Heart right ventricle (tissue), 16 donors: ENCODE measurements at regions of chr13 and their contacts with region 1.

Region 1: DNA sequence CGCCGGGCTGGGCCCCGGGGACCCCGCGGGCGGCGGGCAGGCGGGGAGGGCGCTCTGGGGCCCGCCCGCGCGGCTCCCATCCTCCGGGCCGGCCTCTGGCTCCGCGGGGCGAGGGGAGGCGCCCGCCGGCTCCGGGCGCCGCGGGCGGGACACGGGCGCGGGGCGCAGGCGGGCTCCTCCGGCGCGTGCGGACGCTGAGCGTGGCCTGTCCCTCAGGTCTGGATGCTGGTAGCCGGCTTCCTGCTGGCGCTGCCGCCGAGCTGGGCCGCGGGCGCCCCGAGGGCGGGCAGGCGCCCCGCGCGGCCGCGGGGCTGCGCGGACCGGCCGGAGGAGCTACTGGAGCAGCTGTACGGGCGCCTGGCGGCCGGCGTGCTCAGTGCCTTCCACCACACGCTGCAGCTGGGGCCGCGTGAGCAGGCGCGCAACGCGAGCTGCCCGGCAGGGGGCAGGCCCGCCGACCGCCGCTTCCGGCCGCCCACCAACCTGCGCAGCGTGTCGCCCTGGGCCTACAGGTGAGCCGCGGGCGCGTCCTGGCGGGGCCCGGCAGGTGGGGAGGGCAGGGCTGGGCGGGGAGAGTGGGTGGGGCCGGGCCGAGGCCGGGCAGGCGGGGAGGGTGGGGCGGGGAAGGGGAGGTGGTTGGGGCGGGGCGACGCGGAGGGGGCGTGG is 414 bp downstream of the IL17D start:
- DNase-seq: peak; percentile 54 to 76
- ATAC-seq: peak; percentile 73 to 90 (median 81)
- H3K4me3 ChIP-seq: peak overlapping the region in 9 of 10 donors; percentile 27 to 81 (median 52)
- H3K27ac ChIP-seq: peak overlapping the region in 1 of 10 donors; percentile 53
- H3K4me1 ChIP-seq: peaks cover 0 to 25% (median 12%) of the 10 kb centered on the region in 9 donors
- H3K27me3 ChIP-seq: peaks cover 0 to 38% (median 14%) of the 10 kb centered on the region in 7 donors
- CTCF ChIP-seq: peak; percentile 18 to 67 (median 50)

Region 2: DNA sequence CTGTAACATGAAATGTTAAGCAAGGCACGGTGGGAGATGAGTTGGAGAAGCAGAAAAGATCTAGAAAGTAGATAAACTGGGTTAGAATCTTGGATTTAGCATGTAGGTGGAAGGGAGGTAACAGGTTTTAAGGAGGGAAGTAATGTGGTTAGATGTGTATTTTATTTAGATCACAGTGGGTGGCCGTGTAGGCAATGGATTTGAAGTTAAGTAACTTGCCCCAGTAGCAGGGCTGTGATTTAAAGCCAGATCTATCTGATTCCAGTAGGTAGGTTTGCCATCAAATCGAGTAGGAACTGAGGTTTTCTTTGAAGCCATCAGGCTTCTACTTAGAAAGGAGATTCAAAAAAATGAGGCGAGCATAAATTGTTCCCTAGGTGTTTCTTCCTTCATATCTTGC is 51.0 kb before region 1 on chr13:
- intact Hi-C with region 1: no loop called
- DNase-seq: no peak
- ATAC-seq: no peak
- H3K4me3 ChIP-seq: no peak overlapping the region
- H3K27ac ChIP-seq: no peak overlapping the region
- H3K4me1 ChIP-seq: no peaks in the 10 kb centered on the region
- H3K27me3 ChIP-seq: no peaks in the 10 kb centered on the region
- CTCF ChIP-seq: no peak

Region 3: DNA sequence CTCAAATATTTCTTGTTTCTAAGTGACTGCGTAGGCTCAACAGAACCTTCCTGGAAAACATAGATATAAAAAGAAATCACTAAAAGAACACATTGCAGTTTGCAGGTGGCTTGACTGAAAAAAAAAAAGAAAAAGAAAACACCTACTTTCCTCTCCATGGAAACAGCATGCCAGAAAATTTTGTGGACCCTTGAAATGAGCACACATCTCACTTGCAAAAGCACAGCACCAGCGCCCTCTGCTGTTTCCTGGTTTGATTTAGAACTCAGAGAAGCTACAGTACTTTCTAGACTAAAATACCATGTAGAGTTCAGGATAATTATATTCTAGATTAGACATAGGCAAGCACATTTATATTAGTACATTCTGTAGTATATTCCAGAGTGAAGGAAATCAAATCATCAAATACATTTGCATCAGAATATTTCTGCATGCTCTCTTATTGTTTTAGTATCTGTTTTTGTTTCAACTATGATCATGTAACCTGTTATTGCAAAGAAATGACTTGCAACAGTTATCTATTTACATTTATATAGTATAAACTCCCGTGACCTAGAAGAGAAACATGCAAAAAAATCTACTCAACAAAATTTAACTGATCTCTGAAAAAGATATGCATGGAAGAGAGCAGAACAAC is 221.0 kb after region 1 on chr13:
- intact Hi-C with region 1: loop called in 1 of 10 experiments (anchors 5 kb)
- DNase-seq: peak; percentile 46 to 80
- ATAC-seq: peak in 3 of 8 donors; percentile 48 to 61 (median 58)
- H3K4me3 ChIP-seq: no peak overlapping the region
- H3K27ac ChIP-seq: no peak overlapping the region
- H3K4me1 ChIP-seq: no peaks in the 10 kb centered on the region
- H3K27me3 ChIP-seq: no peaks in the 10 kb centered on the region
- CTCF ChIP-seq: peak; percentile 40 to 90 (median 83)